ENCODE measurements at regions of chr2 and their contacts with region 1.

Region 1: DNA sequence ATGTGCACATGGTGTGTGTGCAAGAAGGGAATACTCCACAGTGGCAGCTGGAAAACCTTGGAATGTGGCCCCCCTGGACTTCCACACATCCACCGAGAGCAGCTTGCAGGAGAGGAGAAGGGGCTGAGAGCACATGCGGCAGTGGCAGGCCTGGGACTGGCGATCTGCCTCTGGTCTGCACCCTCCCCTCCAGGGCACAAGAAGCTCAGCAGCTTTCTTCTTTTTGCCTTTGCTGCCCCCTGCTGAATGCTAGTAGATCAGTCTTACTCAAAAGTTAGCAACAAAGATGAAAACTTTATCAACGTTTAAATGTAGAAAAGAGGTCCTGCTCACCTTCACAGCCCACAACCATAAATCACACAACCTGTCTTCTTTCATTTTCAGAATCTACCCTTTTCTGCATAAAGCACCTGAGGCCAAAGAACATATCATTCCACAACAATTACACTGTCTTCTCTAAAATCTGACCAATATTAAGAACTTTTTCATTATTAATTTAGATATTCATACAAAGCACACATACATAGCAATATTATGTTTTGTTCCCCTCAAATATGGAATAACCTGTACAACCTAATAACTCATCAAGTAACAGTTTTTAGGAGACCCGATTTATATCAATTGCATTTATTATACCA is 34.6 kb downstream of the TGFBRAP1 start:
- DNase-seq: peak; percentile 60
- H3K4me3 Mint-ChIP-seq: no peak overlapping the region
- H3K27ac Mint-ChIP-seq: no peak overlapping the region
- H3K4me1 Mint-ChIP-seq: peaks cover 14% of the 10 kb centered on the region
- H3K27me3 Mint-ChIP-seq: no peaks in the 10 kb centered on the region
- CTCF ChIP-seq: peak; percentile 48

Region 2: GRCh38 chr2:105284023-105284422 is 10.9 kb before region 1 on chr2:
- CTCF ChIA-PET with region 1: interaction called, 20 read pairs
- POLR2A ChIA-PET with region 1: no interaction called
- intact Hi-C with region 1: no loop called
- DNase-seq: no peak
- H3K4me3 Mint-ChIP-seq: no peak overlapping the region
- H3K27ac Mint-ChIP-seq: no peak overlapping the region
- H3K4me1 Mint-ChIP-seq: no peaks in the 10 kb centered on the region
- H3K27me3 Mint-ChIP-seq: no peaks in the 10 kb centered on the region
- CTCF ChIP-seq: no peak

Region 3: DNA sequence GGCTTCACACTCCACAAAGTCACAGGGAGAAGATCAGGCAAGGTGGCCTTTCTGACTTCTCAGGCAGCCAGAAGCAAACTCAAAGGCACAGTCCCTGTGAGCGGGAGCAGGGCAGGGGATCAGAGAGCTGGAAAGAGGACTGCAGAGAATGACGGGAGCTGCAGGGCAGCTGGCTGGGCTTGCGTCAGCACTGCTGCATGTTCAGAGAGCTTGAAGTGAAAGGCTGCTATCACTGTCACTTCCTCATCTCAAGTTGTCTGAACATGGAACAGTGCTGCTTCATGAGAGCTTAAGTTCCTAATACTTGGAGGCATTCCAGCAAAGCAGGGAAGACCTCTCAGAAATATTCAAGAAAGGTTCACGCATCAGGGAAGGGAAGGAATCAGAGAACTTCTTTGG is 14.2 kb after region 1 on chr2:
- CTCF ChIA-PET with region 1: interaction called, 19 read pairs
- POLR2A ChIA-PET with region 1: interaction called, 3 read pairs
- intact Hi-C with region 1: no loop called
- DNase-seq: no peak
- H3K4me3 Mint-ChIP-seq: no peak overlapping the region
- H3K27ac Mint-ChIP-seq: no peak overlapping the region
- H3K4me1 Mint-ChIP-seq: peaks cover 5% of the 10 kb centered on the region
- H3K27me3 Mint-ChIP-seq: no peaks in the 10 kb centered on the region
- CTCF ChIP-seq: no peak

Region 4: DNA sequence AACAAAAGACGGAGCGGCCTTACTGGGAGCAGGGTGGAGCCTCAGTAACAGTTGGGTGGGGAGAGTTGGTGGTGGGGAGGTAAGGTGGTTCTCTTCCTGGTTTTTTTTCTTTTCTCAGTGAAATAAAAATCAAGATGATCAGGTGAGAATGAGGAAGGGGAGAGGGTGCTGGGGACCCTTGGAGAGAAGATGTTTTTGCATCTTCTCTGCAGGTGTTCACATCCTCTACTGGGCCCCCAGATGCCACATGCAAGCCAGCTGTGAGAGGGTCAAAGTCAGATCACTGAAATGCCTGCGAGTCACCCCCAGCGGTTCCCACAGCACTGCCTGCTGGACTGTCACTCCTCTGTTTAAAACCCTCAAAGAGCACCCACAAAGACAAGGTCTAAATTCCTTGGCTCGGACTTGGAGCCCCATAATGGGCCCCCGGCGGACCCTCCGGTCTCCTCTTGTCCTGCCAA is 173.6 kb after region 1 on chr2:
- CTCF ChIA-PET with region 1: no interaction called
- POLR2A ChIA-PET with region 1: no interaction called
- intact Hi-C with region 1: no loop called
- DNase-seq: no peak
- H3K4me3 Mint-ChIP-seq: no peak overlapping the region
- H3K27ac Mint-ChIP-seq: no peak overlapping the region
- H3K4me1 Mint-ChIP-seq: no peaks in the 10 kb centered on the region
- H3K27me3 Mint-ChIP-seq: peaks cover 11% of the 10 kb centered on the region
- CTCF ChIP-seq: no peak